Activated CD4-positive, alpha-beta memory T cell treated with anti-CD3 and anti-CD28 coated beads for 36 hours (primary cell): ENCODE measurements at regions of chr10 and their contacts with region 1.

Region 1: GRCh38 chr10:62244780-62245467 is 23.7 kb downstream of the RTKN2 start:
- DNase-seq: peak; percentile 62
- H3K4me3 Mint-ChIP-seq: no peak overlapping the region
- H3K27ac Mint-ChIP-seq: peak overlapping the region; percentile 69
- H3K4me1 Mint-ChIP-seq: peaks cover 37% of the 10 kb centered on the region
- H3K27me3 Mint-ChIP-seq: no peaks in the 10 kb centered on the region

Region 2: DNA sequence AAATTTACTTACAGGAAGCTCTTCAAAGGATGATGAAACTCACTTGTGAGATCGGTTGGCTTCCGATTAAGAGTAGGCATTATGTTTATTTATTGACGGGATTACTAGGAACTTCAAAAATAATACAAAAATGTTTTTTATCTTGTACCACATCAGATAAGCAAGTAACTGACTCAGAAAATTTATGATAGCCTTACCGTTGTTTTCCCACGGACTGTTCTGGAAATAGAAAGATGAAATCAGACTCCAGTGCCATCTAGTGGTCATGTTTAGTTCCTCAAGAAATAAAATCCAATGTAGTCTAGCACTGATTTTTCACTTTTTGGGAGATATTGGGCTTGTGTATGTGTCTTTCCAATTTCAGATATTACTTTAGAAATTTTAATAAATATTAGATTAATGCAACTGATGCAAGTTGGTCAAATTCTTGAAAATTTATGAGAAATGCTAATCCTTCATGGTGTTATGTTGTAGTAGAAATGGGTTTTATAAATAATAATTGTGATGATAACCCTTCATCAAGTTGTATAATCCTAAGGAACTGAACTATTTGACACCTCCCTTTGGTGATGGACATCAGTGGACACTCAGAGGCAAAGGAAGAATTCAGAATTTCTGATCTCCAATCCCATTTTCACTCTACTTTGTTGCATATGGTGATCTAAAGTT is 960.6 kb before region 1 on chr10:
- CTCF ChIA-PET with region 1: no interaction called
- POLR2A ChIA-PET with region 1: no interaction called
- intact Hi-C with region 1: loop called (anchors 10 kb)
- DNase-seq: no peak
- H3K4me3 Mint-ChIP-seq: peak overlapping the region; percentile 27
- H3K27ac Mint-ChIP-seq: no peak overlapping the region
- H3K4me1 Mint-ChIP-seq: peaks cover 18% of the 10 kb centered on the region
- H3K27me3 Mint-ChIP-seq: peaks cover 2% of the 10 kb centered on the region

Region 3: GRCh38 chr10:61896854-61897661 is 347.9 kb before region 1 on chr10:
- CTCF ChIA-PET with region 1: interaction called, 19 read pairs
- POLR2A ChIA-PET with region 1: interaction called, 5 read pairs
- intact Hi-C with region 1: loop called (anchors 1 kb)
- DNase-seq: peak; percentile 70
- H3K4me3 Mint-ChIP-seq: peak overlapping the region; percentile 66
- H3K27ac Mint-ChIP-seq: peak overlapping the region; percentile 95
- H3K4me1 Mint-ChIP-seq: peaks cover 43% of the 10 kb centered on the region
- H3K27me3 Mint-ChIP-seq: no peaks in the 10 kb centered on the region

Region 4: DNA sequence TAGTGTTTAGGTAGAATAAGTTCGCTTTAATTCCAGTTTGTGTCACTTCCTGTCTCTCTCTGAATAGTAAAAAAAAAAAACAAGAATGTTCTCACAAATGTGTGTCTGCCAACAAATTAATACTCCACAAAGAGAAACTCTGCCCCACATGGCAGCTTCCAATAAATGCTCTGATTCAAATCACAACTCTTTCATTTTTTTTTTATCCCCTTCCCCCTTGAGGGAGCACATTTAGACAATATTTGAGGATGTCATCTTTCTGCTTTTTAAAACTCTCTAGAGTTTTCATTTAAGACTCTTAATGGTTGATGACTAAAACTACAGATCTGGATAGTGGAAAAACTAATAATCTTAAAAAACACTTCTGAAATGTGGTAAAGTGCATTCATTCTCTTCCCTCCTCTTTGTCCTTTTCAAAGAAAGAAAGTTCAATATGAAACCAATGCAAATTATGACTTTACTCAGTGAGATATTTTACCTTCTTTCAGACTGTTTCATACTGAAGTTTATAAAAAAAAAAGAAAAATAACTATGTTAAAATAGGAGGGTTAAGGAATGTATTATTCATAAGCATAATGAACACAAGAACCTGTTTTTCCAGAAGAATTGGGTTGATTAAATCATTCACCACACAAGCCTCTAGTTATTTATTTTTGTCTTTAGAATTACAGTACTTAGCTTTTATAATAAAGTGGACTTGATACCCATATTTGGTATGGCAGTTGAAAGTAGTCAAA is 301.1 kb before region 1 on chr10:
- CTCF ChIA-PET with region 1: interaction called, 10 read pairs
- POLR2A ChIA-PET with region 1: no interaction called
- intact Hi-C with region 1: loop called (anchors 2 kb)
- DNase-seq: peak; percentile 34
- H3K4me3 Mint-ChIP-seq: peak overlapping the region; percentile 70
- H3K27ac Mint-ChIP-seq: peak overlapping the region; percentile 92
- H3K4me1 Mint-ChIP-seq: peaks cover 57% of the 10 kb centered on the region
- H3K27me3 Mint-ChIP-seq: no peaks in the 10 kb centered on the region

Region 5: DNA sequence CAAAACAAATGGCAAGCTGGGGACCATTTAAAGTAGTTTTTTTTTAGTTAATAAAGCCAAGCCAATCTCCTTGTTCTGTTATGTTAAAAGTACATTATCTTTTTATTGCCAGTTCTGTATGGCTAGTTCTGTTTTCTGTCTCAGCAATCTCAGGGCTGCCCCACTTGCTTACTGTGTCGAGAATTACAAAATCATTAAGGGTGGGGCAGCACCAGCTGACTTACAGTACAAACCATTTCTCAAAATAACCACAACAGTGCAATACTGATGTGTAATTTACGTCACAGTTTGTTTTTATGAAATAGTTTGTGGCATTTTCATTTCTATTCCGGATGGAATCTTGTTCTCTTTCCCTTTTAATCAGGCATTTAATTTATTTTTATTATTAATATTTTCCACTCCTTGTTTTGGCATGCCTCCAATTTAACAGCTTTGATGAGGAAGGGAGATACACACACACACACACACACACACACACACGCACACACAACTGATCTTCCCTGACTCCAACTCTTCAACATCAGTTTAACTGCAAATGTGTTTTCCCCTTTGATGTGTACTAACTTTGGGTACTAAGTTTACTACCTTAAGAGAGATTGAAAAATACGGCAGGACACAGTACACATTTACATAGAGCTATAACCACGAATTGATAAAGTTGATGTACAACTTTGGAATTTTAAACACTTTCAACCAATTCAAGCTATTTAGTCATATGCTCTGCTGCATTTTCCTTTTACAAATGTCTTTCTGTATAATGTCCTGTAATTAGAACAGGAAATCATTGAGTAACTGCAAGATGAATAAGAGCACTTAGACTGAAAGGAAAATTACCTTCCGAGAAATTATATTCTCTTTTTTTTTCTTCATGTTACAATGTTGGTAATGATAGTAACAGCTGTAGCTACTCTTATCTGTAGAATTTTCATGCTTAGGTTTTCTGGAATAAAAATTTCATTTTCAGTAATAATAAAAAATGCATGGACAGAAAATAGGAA is 252.0 kb before region 1 on chr10:
- CTCF ChIA-PET with region 1: interaction called, 8 read pairs
- POLR2A ChIA-PET with region 1: interaction called, 3 read pairs
- intact Hi-C with region 1: loop called (anchors 1 kb)
- DNase-seq: peak; percentile 75
- H3K4me3 Mint-ChIP-seq: peak overlapping the region; percentile 57
- H3K27ac Mint-ChIP-seq: peak overlapping the region; percentile 99
- H3K4me1 Mint-ChIP-seq: peaks cover 85% of the 10 kb centered on the region
- H3K27me3 Mint-ChIP-seq: no peaks in the 10 kb centered on the region

Region 6: GRCh38 chr10:62008946-62009345 is 236.0 kb before region 1 on chr10:
- CTCF ChIA-PET with region 1: no interaction called
- POLR2A ChIA-PET with region 1: no interaction called
- intact Hi-C with region 1: no loop called
- DNase-seq: no peak
- H3K4me3 Mint-ChIP-seq: no peak overlapping the region
- H3K27ac Mint-ChIP-seq: peak overlapping the region; percentile 29
- H3K4me1 Mint-ChIP-seq: peaks cover 64% of the 10 kb centered on the region
- H3K27me3 Mint-ChIP-seq: no peaks in the 10 kb centered on the region

Region 7: GRCh38 chr10:62082729-62083411 is 162.1 kb before region 1 on chr10:
- CTCF ChIA-PET with region 1: interaction called, 5 read pairs
- POLR2A ChIA-PET with region 1: interaction called, 5 read pairs
- intact Hi-C with region 1: loop called (anchors 5 kb)
- DNase-seq: peak; percentile 75
- H3K4me3 Mint-ChIP-seq: peak overlapping the region; percentile 18
- H3K27ac Mint-ChIP-seq: peak overlapping the region; percentile 85
- H3K4me1 Mint-ChIP-seq: peaks cover 77% of the 10 kb centered on the region
- H3K27me3 Mint-ChIP-seq: no peaks in the 10 kb centered on the region

Region 8: GRCh38 chr10:62121187-62121530 is 123.8 kb before region 1 on chr10:
- CTCF ChIA-PET with region 1: no interaction called
- POLR2A ChIA-PET with region 1: no interaction called
- intact Hi-C with region 1: loop called (anchors 1 kb)
- DNase-seq: no peak
- H3K4me3 Mint-ChIP-seq: no peak overlapping the region
- H3K27ac Mint-ChIP-seq: peak overlapping the region; percentile 59
- H3K4me1 Mint-ChIP-seq: peaks cover 31% of the 10 kb centered on the region
- H3K27me3 Mint-ChIP-seq: no peaks in the 10 kb centered on the region

Region 9: GRCh38 chr10:62582804-62583208 is 337.9 kb after region 1 on chr10:
- CTCF ChIA-PET with region 1: no interaction called
- POLR2A ChIA-PET with region 1: no interaction called
- intact Hi-C with region 1: no loop called
- DNase-seq: no peak
- H3K4me3 Mint-ChIP-seq: no peak overlapping the region
- H3K27ac Mint-ChIP-seq: no peak overlapping the region
- H3K4me1 Mint-ChIP-seq: no peaks in the 10 kb centered on the region
- H3K27me3 Mint-ChIP-seq: no peaks in the 10 kb centered on the region